Heart right ventricle (tissue), 16 donors: ENCODE measurements at regions of chr2 and their contacts with region 1.

Region 1: GRCh38 chr2:72678024-72678423 is 147.8 kb downstream of the EXOC6B start:
- DNase-seq: no peak
- ATAC-seq: no peak
- H3K4me3 ChIP-seq: no peak overlapping the region
- H3K27ac ChIP-seq: no peak overlapping the region
- H3K4me1 ChIP-seq: peaks cover 4 to 75% (median 42%) of the 10 kb centered on the region in 9 donors
- H3K27me3 ChIP-seq: no peaks in the 10 kb centered on the region
- CTCF ChIP-seq: no peak

Region 2: GRCh38 chr2:72625366-72625765 is 52.7 kb before region 1 on chr2:
- intact Hi-C with region 1: loop called in 1 of 10 experiments (anchors 2 kb)
- DNase-seq: no peak
- ATAC-seq: no peak
- H3K4me3 ChIP-seq: no peak overlapping the region
- H3K27ac ChIP-seq: no peak overlapping the region
- H3K4me1 ChIP-seq: peaks cover 0 to 46% (median 14%) of the 10 kb centered on the region in 9 donors
- H3K27me3 ChIP-seq: no peaks in the 10 kb centered on the region
- CTCF ChIP-seq: no peak

Region 3: GRCh38 chr2:72862239-72862988 is 184.4 kb after region 1 on chr2:
- intact Hi-C with region 1: loop called in 1 of 10 experiments (anchors 5 kb)
- DNase-seq: peak; percentile 88 to 90
- ATAC-seq: peak; percentile 94 to 99 (median 98)
- H3K4me3 ChIP-seq: peak overlapping the region in 7 of 10 donors; percentile 23 to 32 (median 30)
- H3K27ac ChIP-seq: no peak overlapping the region
- H3K4me1 ChIP-seq: peaks cover 0 to 12% (median 9%) of the 10 kb centered on the region in 9 donors
- H3K27me3 ChIP-seq: peaks cover 0 to 50% (median 4%) of the 10 kb centered on the region in 7 donors
- CTCF ChIP-seq: peak; percentile 96 to 100 (median 99)